H1 (cell line): ENCODE measurements at regions of chr6 and their contacts with region 1.

Region 1: DNA sequence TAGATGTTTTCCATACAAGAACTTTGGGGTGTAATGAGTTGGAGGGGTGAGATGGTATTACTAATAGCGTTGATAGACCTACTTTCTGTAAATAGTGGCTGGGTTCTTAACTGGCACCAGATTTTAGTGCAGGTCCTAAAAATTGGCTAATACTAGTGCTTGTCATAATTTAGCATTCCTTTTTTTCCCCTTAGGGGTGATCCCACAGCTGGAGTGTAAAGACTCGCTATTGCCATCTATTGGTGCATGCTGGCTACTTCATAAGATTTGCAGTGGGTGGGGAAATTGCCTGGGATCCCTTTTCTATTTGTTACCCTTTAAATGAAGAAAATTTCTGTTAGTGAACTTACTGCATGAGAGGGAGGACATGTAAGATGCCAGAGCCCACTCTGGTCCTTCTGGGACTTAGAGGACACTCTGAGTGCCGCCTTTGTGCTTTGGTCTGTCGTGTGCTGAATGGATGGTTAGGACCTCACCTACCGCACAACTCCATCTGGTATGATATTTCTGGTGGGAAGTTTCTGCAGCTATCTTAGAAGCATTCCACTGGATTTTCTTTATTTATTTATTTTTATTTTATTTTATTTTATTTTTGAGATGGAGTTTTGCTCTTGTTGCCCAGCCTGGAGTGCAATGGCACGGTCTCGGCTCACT is 195.5 kb downstream of the JARID2 start:
- DNase-seq: no peak
- H3K4me3 ChIP-seq: no peak overlapping the region
- H3K27ac ChIP-seq: no peak overlapping the region
- H3K4me1 ChIP-seq: peaks cover 8 to 42% (median 24%) of the 10 kb centered on the region in 4 experiments
- H3K27me3 ChIP-seq: no peaks in the 10 kb centered on the region
- CTCF ChIP-seq: peak in 2 of 3 experiments; percentile 50 to 74; a peak in 3 of 4 replicates
- EP300 ChIP-seq: no peak
- POLR2A ChIP-seq: no peak
- RAD21 ChIP-seq: peak; percentile 66 to 71

Region 2: DNA sequence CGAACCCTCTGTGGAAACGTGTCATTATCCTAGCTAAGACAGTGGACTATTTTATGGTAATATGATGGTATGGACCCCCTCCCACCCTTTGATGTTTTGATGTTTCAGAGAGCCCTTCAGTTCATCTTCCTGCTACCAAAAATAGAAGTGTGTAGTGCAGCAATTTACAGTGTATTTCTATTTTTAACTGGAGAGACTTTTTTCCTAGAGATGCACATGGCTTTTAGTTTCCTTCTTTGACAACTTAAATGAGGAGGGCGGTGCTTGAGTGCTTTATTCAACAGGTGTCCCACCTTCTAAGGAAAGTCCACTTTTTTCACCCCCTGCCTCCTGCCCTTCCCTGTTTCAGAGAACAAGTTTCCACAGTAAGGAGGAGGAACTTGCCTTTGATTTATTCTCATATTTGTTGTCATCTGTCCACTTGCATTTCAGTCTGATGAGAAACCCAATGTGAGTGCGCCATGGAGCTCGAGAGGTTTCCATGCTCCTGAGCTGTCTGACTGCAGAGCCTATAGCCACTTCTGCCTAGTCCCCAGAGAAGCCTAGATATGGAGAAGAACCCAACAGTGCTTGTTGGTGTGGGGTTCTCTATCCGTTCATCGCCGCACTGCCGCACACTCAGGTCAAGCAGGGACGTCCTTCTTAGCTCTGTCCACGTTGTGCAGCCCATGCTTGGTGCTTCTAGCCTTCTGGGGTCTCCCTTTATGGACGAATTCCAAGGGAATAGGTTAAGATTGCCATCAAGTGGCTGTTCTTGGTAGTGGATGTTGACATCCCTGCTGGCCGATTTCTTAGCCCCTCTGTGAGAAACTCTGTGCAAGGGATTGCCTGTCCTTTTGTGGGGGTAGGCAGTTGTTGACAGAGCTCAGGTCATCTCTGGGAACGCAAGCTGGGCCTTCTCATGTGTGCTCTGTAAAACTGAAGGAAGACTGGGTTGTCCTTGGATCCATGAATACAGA is 51.3 kb before region 1 on chr6:
- CTCF ChIA-PET with region 1: interaction called, 11 read pairs
- POLR2A ChIA-PET with region 1: no interaction called
- DNase-seq: no peak
- H3K4me3 ChIP-seq: no peak overlapping the region
- H3K27ac ChIP-seq: no peak overlapping the region
- H3K4me1 ChIP-seq: peaks cover 7 to 46% (median 33%) of the 10 kb centered on the region in 4 experiments
- H3K27me3 ChIP-seq: no peaks in the 10 kb centered on the region
- CTCF ChIP-seq: peak; percentile 35 to 80 (median 62); a peak in 3 of 4 replicates
- EP300 ChIP-seq: no peak
- POLR2A ChIP-seq: peak in 1 of 2 experiments; percentile 25
- RAD21 ChIP-seq: peak; percentile 86 to 88

Region 3: DNA sequence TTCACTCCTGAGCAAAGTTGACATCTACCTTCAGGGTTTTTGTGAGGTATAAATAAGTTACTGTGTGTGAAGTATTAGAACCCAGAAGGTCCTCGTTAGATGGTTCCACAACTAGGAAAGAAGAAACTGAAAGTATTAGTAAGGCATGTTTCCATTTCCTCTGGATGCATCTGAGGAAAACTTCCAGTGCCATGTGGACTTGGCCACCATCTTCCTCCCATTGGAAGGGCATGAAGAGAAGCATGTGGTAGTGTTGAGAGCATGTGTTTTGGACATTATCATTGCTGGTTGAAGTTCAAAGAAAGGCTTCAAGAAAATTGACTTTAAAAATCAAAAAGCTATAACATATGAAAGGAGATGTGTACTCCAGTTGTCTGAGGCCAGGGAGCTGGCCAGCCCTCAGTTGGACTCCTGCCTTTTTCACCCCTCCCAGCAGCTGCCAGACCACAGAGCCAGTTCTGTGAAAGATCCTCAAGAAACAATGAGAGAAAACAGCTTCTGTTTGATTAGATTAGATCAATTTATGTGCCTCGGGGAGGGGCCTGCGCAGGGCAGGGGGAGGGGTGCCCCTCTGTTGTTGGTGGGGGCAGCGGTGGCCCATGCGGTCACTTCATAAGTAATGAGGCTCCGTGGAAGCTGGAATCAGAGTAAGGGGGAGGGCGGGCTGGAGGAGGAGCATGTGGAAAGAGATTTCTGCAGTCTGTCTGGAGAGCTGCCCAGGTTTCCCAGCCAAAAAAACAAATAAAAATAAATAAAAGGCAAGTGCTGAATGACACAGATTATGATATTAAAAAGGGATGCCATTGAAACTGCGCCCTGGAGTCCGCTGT is 41.5 kb before region 1 on chr6:
- CTCF ChIA-PET with region 1: interaction called, 10 read pairs
- POLR2A ChIA-PET with region 1: no interaction called
- DNase-seq: no peak
- H3K4me3 ChIP-seq: peak overlapping the region in 1 of 4 experiments; percentile 37; a peak in 1 of 8 replicates
- H3K27ac ChIP-seq: no peak overlapping the region
- H3K4me1 ChIP-seq: peaks cover 18 to 48% (median 39%) of the 10 kb centered on the region in 4 experiments
- H3K27me3 ChIP-seq: no peaks in the 10 kb centered on the region
- CTCF ChIP-seq: no peak
- EP300 ChIP-seq: no peak
- POLR2A ChIP-seq: no peak
- RAD21 ChIP-seq: no peak

Region 4: GRCh38 chr6:15420959-15421438 is 20.3 kb before region 1 on chr6:
- CTCF ChIA-PET with region 1: interaction called, 21 read pairs
- POLR2A ChIA-PET with region 1: interaction called, 6 read pairs
- DNase-seq: no peak
- H3K4me3 ChIP-seq: no peak overlapping the region
- H3K27ac ChIP-seq: no peak overlapping the region
- H3K4me1 ChIP-seq: peaks cover 2 to 22% (median 12%) of the 10 kb centered on the region in 4 experiments; a peak in 5 of 7 replicates
- H3K27me3 ChIP-seq: no peaks in the 10 kb centered on the region
- CTCF ChIP-seq: no peak
- EP300 ChIP-seq: no peak
- POLR2A ChIP-seq: no peak
- RAD21 ChIP-seq: no peak

Region 5: GRCh38 chr6:15427331-15428070 is 13.8 kb before region 1 on chr6:
- CTCF ChIA-PET with region 1: interaction called, 21 read pairs
- POLR2A ChIA-PET with region 1: interaction called, 6 read pairs
- DNase-seq: no peak
- H3K4me3 ChIP-seq: no peak overlapping the region
- H3K27ac ChIP-seq: no peak overlapping the region
- H3K4me1 ChIP-seq: peaks cover 9 to 51% (median 23%) of the 10 kb centered on the region in 4 experiments
- H3K27me3 ChIP-seq: no peaks in the 10 kb centered on the region
- CTCF ChIP-seq: no peak
- EP300 ChIP-seq: no peak
- POLR2A ChIP-seq: no peak
- RAD21 ChIP-seq: no peak

Region 6: DNA sequence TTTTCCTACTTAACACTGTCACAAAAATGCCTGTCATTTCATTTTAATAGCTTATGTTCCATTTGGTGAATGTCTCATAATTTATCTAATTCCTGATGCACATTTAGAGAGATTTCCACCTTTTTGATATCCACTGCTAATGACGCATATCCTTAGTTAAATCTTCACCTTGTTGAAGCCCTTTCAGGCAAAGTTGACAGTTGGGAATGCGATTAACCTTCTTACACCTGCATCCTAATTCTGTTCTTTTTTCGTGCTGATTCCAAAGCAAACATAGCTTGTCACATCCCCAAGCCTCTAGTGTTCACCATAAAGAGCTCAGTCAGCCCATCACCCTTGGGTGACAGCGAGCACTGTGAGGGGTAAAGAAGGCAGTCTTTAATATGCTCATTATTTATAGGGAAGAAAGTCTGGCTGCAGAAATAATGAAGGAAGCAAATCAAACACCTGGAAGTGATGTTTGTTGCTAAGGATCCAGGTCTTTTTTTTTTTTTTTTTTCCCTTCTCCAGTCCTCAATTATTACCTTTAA is 15.8 kb after region 1 on chr6:
- CTCF ChIA-PET with region 1: interaction called, 13 read pairs
- POLR2A ChIA-PET with region 1: interaction called, 3 read pairs
- DNase-seq: no peak
- H3K4me3 ChIP-seq: no peak overlapping the region
- H3K27ac ChIP-seq: no peak overlapping the region
- H3K4me1 ChIP-seq: peaks cover 3 to 34% (median 14%) of the 10 kb centered on the region in 4 experiments; a peak in 6 of 7 replicates
- H3K27me3 ChIP-seq: no peaks in the 10 kb centered on the region
- CTCF ChIP-seq: no peak
- EP300 ChIP-seq: no peak
- POLR2A ChIP-seq: no peak
- RAD21 ChIP-seq: no peak